ENCODE measurements at regions of chr2 and their contacts with region 1.

Region 1: GRCh38 chr2:241637000-241637791 is at the starts of genes ATG4B and THAP4:
- DNase-seq: peak; percentile 93
- ATAC-seq: peak; percentile 71
- H3K4me3 ChIP-seq: peak within 1 kb of the TSS; percentile 76 to 97 (median 95)
- H3K4me3 Mint-ChIP-seq: peak within 1 kb of the TSS; percentile 84
- H3K27ac ChIP-seq: peak within 1 kb of the TSS; percentile 90 to 95
- H3K27ac Mint-ChIP-seq: peak within 1 kb of the TSS; percentile 96
- H3K4me1 ChIP-seq: peaks cover 19 to 24% of the 10 kb centered on the region in 2 donors
- H3K4me1 Mint-ChIP-seq: peaks cover 45% of the 10 kb centered on the region
- H3K27me3 ChIP-seq: no peaks in the 10 kb centered on the region
- H3K27me3 Mint-ChIP-seq: no peaks in the 10 kb centered on the region
- CTCF ChIP-seq: no peak
- total RNA-seq, gene ATG4B: 130 and 145 TPM in 2 replicates
- total RNA-seq, gene THAP4: 26.5 and 29.9 TPM in 2 replicates

Region 2: GRCh38 chr2:241217320-241218031 is 419.7 kb before region 1 on chr2:
- CTCF ChIA-PET with region 1: no interaction called
- POLR2A ChIA-PET with region 1: no interaction called
- intact Hi-C with region 1: loop called (anchors 10 kb)
- DNase-seq: peak; percentile 80
- ATAC-seq: peak; percentile 68
- H3K4me3 ChIP-seq: peak overlapping the region in 4 of 5 experiments; percentile 35 to 56 (median 45)
- H3K4me3 Mint-ChIP-seq: peak overlapping the region; percentile 82
- H3K27ac ChIP-seq: peak overlapping the region in 1 of 2 donors; percentile 23
- H3K27ac Mint-ChIP-seq: peak overlapping the region; percentile 73
- H3K4me1 ChIP-seq: peaks cover 10 to 12% of the 10 kb centered on the region in 2 donors
- H3K4me1 Mint-ChIP-seq: peaks cover 14% of the 10 kb centered on the region
- H3K27me3 ChIP-seq: peaks cover 0 to 2% (median 0%) of the 10 kb centered on the region in 4 experiments
- H3K27me3 Mint-ChIP-seq: no peaks in the 10 kb centered on the region
- CTCF ChIP-seq: no peak

Region 3: DNA sequence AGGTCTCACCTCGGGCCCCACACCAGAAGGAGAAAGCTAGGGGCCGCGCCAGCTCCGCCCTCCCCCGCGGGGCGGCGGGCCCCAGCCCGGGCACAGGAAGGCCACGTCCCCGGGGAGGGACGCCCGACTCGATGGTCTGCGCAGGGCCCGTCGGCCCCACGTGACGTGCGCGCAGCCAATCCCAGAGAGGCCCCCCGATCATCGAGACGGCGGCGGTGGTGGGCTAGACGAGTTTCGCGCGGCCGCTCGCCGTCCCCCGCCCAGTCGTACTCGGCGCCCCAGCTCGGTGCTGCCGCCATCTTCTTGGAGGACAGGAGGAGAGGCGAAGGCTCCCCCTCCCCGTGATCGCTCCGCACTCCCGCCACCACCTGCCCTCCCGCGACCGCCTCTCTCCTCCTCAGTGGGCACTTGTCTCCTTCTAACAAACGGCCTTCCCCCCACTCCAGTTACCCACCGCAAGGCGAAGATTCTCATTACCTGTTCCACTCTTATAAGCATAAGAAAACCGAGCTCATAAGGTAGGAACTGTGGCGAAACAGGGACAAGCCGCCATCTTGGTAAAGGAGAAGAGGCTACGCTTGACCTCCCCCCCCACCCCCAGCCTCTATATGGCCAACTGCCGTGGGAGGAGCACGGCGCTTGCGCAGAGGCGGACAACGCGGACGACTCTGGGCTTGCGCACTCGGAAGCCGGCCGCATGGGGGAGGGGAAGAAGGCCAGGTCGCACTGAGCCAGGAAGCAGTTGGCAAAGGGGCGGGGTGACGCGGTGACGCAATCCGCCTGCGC is 321.9 kb before region 1 on chr2 and contains the start of gene HDLBP:
- CTCF ChIA-PET with region 1: interaction called, 4 read pairs
- POLR2A ChIA-PET with region 1: no interaction called
- intact Hi-C with region 1: loop called (anchors 1 kb)
- DNase-seq: peak; percentile 100
- ATAC-seq: peak; percentile 69
- H3K4me3 ChIP-seq: peak within 1 kb of the TSS; percentile 90 to 99 (median 91)
- H3K4me3 Mint-ChIP-seq: peak within 1 kb of the TSS; percentile 95
- H3K27ac ChIP-seq: peak within 1 kb of the TSS; percentile 98 to 99
- H3K27ac Mint-ChIP-seq: peak within 1 kb of the TSS; percentile 99
- H3K4me1 ChIP-seq: peaks cover 43 to 47% of the 10 kb centered on the region in 2 donors
- H3K4me1 Mint-ChIP-seq: peaks cover 72% of the 10 kb centered on the region
- H3K27me3 ChIP-seq: no peaks in the 10 kb centered on the region
- H3K27me3 Mint-ChIP-seq: no peaks in the 10 kb centered on the region
- CTCF ChIP-seq: peak; percentile 39
- total RNA-seq, gene HDLBP: 127 and 153 TPM in 2 replicates

Region 4: DNA sequence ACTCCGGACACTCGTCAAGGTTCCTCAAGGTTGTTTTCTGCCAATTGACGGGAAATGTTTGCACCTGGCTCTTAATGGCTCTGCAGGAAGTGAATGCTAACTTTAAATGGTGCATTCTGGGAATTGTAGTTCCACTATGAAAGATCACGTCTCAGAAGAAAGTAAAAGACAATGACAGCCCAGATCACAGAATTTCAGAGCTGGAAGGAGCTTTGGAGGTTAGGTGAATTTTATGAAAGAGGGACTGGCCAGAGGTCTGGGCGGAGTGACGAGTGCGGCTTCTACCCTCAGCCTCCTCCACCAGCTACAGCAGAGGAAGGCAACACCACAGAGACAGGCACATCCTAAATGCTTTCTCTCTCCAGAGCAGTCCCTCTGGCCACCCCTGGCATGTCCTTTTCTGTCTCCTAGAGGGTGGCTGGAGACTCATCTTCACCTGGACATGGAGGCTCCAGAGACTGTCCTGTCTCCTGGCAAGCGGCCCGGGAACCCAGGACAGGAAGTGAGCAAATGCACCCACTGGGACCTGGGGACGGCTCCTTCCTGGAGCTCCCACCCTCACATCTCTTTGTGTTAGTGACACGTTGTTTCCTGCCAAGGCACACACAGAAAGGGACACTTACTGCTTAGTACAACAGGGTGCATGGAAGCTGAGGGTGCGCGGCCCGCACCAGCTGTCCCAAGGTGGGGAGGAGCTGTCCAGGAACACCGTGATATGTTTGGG is 19.6 kb before region 1 on chr2:
- CTCF ChIA-PET with region 1: interaction called, 3 read pairs
- POLR2A ChIA-PET with region 1: no interaction called
- intact Hi-C with region 1: loop called (anchors 1 kb)
- DNase-seq: peak; percentile 76
- ATAC-seq: peak; percentile 77
- H3K4me3 ChIP-seq: peak overlapping the region; percentile 43 to 74 (median 55)
- H3K4me3 Mint-ChIP-seq: peak overlapping the region; percentile 84
- H3K27ac ChIP-seq: peak overlapping the region; percentile 30 to 64
- H3K27ac Mint-ChIP-seq: peak overlapping the region; percentile 76
- H3K4me1 ChIP-seq: peaks cover 15 to 18% of the 10 kb centered on the region in 2 donors
- H3K4me1 Mint-ChIP-seq: peaks cover 22% of the 10 kb centered on the region
- H3K27me3 ChIP-seq: no peaks in the 10 kb centered on the region
- H3K27me3 Mint-ChIP-seq: no peaks in the 10 kb centered on the region
- CTCF ChIP-seq: no peak

Region 5: DNA sequence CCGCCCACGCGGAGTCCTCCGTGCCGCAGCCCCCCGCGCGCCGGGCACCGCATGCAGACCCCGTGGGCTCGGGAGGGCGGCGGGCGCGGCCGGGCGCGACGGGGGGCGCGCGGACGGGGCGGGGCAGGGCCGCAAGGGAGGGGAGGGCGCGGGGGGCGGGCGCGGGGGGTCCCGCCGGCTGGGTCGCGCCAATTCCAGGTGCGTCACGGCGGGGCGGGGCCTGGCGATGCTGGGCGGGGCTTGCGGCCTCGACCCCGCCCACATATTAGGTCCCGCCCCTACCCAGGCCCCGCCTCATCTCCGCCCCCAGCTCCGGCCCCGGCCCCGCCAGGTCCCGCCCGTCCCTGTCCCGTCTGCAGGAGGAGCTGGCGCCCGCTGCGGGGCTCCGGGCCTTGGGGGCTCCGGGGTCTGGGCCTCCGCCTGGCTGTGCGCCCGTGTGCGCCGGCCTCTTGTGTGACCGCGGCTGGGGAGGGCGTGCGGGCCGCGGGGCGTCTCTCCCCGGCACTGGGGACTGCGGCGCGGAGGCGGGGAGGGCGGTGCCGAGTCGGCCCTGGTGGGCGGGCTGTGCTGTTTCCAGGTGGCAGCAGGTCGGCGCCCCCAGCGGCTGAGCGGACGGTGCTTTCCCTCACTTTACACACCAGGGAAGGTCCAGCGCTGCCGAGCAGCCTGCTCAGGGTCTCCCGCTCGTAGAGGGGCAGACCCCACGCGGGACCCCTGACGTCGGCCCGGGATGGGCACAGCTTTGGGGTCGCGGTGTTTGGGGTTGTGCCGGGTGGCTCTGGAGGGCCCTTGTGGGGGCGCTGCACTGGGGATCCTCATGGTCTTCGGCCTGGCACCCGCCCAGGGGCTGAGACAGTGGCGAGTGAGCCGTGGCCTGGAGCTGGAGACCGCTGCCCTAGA is 65.2 kb after region 1 on chr2:
- CTCF ChIA-PET with region 1: interaction called, 5 read pairs
- POLR2A ChIA-PET with region 1: interaction called, 12 read pairs
- intact Hi-C with region 1: loop called (anchors 1 kb)
- DNase-seq: peak; percentile 96
- ATAC-seq: peak; percentile 75
- H3K4me3 ChIP-seq: peak overlapping the region; percentile 15 to 80 (median 74)
- H3K4me3 Mint-ChIP-seq: peak overlapping the region; percentile 83
- H3K27ac ChIP-seq: peak overlapping the region; percentile 65 to 89
- H3K27ac Mint-ChIP-seq: peak overlapping the region; percentile 86
- H3K4me1 ChIP-seq: peaks cover 14 to 21% of the 10 kb centered on the region in 2 donors
- H3K4me1 Mint-ChIP-seq: peaks cover 20% of the 10 kb centered on the region
- H3K27me3 ChIP-seq: no peaks in the 10 kb centered on the region
- H3K27me3 Mint-ChIP-seq: no peaks in the 10 kb centered on the region
- CTCF ChIP-seq: peak; percentile 74